ENCODE measurements at regions of chr1 and their contacts with region 1.

Region 1: GRCh38 chr1:94299627-94300552 is 62.5 kb upstream of the ARHGAP29 start:
- DNase-seq: peak; percentile 71 to 100
- H3K4me3 ChIP-seq: peak overlapping the region; percentile 3; the same call in 1 of the 2 replicates
- H3K27ac ChIP-seq: peak overlapping the region; percentile 97
- H3K4me1 ChIP-seq: peaks cover 55% of the 10 kb centered on the region
- H3K27me3 ChIP-seq: no peaks in the 10 kb centered on the region
- CTCF ChIP-seq: no peak

Region 2: DNA sequence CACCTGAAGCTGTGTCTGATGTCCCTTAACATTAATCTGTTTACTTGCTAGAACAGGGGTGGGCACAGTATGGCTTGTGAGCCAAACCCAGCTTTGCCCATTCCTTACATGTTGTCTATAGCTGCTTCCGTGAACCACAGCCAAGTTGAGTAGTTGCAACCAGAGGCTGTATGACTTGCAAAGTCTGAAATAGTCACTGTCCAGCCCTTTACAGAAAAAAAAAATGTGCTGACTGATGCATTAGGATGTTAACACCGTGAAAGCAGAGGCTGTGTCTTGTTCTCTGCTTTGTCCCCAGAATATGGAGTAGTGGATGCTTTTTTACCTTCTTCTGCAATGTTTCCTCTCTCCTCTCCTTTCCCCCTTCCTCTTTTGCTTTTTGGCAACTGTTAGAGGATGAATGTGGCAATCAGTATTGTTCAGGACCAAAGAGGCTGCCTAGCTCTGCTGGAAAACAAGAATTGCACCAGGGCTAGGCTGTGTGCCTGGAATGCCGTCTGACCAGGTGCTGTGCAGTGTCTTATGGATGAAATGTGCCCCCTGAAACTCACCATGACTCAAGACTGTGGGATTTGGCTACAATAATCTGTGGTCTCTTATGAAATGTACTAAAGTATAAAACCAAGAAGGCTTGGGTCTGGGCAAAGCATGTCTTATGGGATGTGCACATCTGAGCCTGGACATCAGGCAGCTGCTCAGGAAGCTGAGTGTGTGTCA is 311.1 kb before region 1 on chr1:
- CTCF ChIA-PET with region 1: no interaction called
- POLR2A ChIA-PET with region 1: interaction called, 23 read pairs
- intact Hi-C with region 1: no loop called
- DNase-seq: peak; percentile 84 to 100
- H3K4me3 ChIP-seq: peak overlapping the region; percentile 25; the same call in 1 of the 2 replicates
- H3K27ac ChIP-seq: peak overlapping the region; percentile 95
- H3K4me1 ChIP-seq: peaks cover 61% of the 10 kb centered on the region
- H3K27me3 ChIP-seq: no peaks in the 10 kb centered on the region
- CTCF ChIP-seq: no peak

Region 3: GRCh38 chr1:94061513-94062443 is 238.1 kb before region 1 on chr1:
- CTCF ChIA-PET with region 1: no interaction called
- POLR2A ChIA-PET with region 1: no interaction called
- intact Hi-C with region 1: no loop called
- DNase-seq: peak; percentile 65 to 83
- H3K4me3 ChIP-seq: no peak overlapping the region
- H3K27ac ChIP-seq: peak overlapping the region; percentile 52
- H3K4me1 ChIP-seq: peaks cover 44% of the 10 kb centered on the region
- H3K27me3 ChIP-seq: no peaks in the 10 kb centered on the region
- CTCF ChIP-seq: peak; percentile 95

Region 4: DNA sequence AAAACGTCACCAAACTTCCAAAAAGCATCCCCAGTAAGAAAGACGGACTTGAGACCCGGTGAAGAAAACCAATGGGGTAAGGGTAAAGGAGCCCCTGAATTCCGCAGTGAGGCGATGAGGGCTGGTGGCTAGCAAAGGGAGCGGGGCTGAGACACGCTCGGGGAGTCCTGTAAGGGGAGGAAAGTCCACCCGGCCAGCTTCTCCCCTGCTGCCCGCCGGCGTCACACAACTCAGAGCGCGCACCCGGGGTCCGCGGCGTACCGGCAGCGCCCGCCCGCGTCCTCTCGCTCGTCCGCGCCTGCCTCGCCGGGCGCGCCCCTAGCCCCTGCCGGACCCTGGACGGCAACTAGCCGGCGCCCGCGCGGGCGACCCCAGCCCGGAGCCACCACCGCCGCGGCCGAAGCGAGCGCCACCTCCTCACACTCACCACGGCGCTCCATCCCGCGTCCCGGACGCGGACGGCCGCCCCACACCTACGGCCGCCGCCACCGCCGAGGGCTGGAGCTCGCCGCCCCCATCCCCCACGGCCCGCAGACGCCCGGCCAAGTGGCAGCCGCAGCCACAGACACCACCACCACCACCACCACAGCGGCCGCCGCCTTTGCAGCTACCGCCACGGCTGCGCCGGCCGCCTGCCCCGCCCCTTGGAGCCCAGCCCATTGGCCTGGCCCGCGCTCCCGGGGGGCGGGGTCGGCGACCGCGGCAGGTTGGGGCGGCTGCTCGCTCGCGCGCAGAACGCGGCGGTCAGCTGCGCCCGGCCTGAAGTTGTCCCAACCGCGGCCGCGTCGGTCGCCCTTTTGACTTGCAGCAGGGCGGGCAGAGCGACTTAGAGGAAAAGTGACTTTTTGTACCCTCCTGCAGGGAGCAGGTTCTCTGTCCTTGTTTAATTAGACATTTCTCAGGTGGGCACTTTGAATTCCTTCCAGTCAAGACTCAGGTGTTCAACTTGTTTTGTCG is 52.5 kb before region 1 on chr1:
- CTCF ChIA-PET with region 1: no interaction called
- POLR2A ChIA-PET with region 1: interaction called, 4 read pairs
- intact Hi-C with region 1: loop called (anchors 1 kb)
- DNase-seq: peak; percentile 78 to 93
- H3K4me3 ChIP-seq: peak overlapping the region; percentile 84
- H3K27ac ChIP-seq: peak overlapping the region; percentile 91
- H3K4me1 ChIP-seq: peaks cover 70% of the 10 kb centered on the region
- H3K27me3 ChIP-seq: no peaks in the 10 kb centered on the region
- CTCF ChIP-seq: no peak

Region 5: DNA sequence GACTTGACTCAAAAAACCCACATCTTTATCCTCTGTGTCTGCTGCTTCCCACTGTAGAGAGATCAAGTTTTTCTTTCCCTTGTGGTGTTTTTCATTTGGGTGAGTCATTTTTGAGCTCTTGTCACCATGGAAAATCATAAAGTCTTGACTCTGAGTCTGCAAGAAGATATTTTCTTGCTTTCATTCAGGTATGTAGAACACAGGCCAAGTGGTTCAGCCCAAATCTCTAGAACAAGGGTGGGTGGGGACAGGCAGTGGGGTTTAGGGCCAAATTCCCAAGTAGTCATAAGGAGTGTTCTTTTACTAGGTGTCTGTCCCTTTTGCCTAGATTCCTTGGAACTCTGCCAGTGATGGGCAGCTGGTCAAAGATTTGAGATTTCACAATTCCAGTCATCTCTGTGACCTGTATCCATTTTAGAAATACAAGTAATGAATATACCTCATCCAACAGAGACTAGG is 41.0 kb before region 1 on chr1:
- CTCF ChIA-PET with region 1: interaction called, 3 read pairs
- POLR2A ChIA-PET with region 1: interaction called, 12 read pairs
- intact Hi-C with region 1: loop called (anchors 1 kb)
- DNase-seq: peak; percentile 91 to 100
- H3K4me3 ChIP-seq: peak overlapping the region; percentile 13; the same call in 1 of the 2 replicates
- H3K27ac ChIP-seq: peak overlapping the region; percentile 98
- H3K4me1 ChIP-seq: peaks cover 74% of the 10 kb centered on the region
- H3K27me3 ChIP-seq: no peaks in the 10 kb centered on the region
- CTCF ChIP-seq: no peak

Region 6: DNA sequence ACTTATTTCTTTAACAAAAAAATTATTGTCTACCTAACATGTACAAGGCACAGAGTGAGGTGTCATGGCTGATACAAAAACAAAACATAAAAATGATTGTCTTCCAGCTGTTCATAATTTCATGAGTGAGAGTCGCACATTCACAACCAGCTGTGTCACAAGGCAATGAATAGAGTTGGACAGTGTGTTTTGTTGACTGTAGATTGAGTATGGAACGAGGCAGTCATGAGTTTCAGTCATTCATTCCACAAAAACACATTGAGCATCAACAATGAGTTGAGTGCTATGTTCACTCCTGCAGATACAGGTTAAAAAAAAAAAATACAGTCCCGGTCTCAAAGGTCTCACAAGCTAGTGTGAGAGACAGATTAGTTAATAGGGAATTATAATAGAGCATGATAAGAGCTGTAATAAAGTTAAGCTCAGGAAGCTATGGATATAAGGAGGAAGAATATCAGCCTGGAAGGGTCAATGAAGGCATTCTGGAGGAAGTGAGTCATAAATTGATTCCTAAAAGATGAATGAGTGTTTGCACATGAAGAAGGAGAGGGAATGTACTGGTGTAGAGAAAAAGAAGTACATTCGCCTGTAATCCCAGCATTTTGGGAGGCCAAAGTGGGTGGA is 14.7 kb before region 1 on chr1:
- CTCF ChIA-PET with region 1: no interaction called
- POLR2A ChIA-PET with region 1: interaction called, 10 read pairs
- intact Hi-C with region 1: no loop called
- DNase-seq: peak in 1 of 2 experiments; percentile 75
- H3K4me3 ChIP-seq: no peak overlapping the region
- H3K27ac ChIP-seq: peak overlapping the region; percentile 21
- H3K4me1 ChIP-seq: peaks cover 26% of the 10 kb centered on the region
- H3K27me3 ChIP-seq: no peaks in the 10 kb centered on the region
- CTCF ChIP-seq: no peak

Region 7: GRCh38 chr1:94562519-94563260 is 262.8 kb after region 1 on chr1:
- CTCF ChIA-PET with region 1: no interaction called
- POLR2A ChIA-PET with region 1: interaction called, 11 read pairs
- intact Hi-C with region 1: no loop called
- DNase-seq: peak; percentile 75 to 94
- H3K4me3 ChIP-seq: no peak overlapping the region; the same call in 1 of the 2 replicates
- H3K27ac ChIP-seq: peak overlapping the region; percentile 65
- H3K4me1 ChIP-seq: peaks cover 39% of the 10 kb centered on the region
- H3K27me3 ChIP-seq: no peaks in the 10 kb centered on the region
- CTCF ChIP-seq: no peak

Measured in PC-9 (cell line).